ENCODE measurements at regions of chr6 and their contacts with region 1.

Region 1: DNA sequence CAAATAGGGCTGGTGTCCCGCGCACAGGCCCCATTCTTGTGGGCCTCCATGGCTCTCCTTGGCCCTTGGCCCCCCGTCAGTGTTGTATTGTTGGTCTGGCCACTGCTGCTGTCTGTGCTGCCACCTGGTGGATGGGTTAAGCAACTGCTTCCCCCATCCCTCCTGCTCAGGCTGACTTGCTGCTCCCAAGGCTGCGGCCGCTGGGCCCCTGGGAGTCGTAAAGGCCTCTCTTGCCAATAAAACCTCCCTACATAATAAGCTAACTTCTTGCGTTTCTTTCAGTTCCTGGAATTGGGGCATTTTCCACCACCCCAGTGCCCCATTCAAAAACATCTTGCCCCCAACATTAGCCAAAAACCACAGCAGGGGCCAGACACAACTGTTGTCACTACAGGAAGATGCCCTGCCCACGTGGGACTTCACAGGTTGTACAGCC is 27.1 kb downstream of the CD83 start:
- DNase-seq: peak; percentile 72
- ATAC-seq: peak; percentile 98
- H3K4me3 ChIP-seq: no peak overlapping the region
- H3K27ac ChIP-seq: no peak overlapping the region
- H3K4me1 ChIP-seq: no peaks in the 10 kb centered on the region
- H3K27me3 ChIP-seq: peaks cover 2 to 24% of the 10 kb centered on the region in 2 experiments; a peak in 3 of 5 replicates
- CTCF ChIP-seq: peak; percentile 91
- EP300 ChIP-seq: no peak
- POLR2A ChIP-seq: no peak
- RAD21 ChIP-seq: peak; percentile 86

Region 2: GRCh38 chr6:14129575-14129974 is 15.1 kb before region 1 on chr6:
- CTCF ChIA-PET with region 1: interaction called, 31 read pairs
- POLR2A ChIA-PET with region 1: no interaction called
- in situ Hi-C with region 1: no loop called
- intact Hi-C with region 1: loop called (anchors 1 kb)
- DNase-seq: peak; percentile 70
- ATAC-seq: peak; percentile 98
- H3K4me3 ChIP-seq: no peak overlapping the region
- H3K27ac ChIP-seq: no peak overlapping the region
- H3K4me1 ChIP-seq: peaks cover 25% of the 10 kb centered on the region
- H3K27me3 ChIP-seq: no peaks in the 10 kb centered on the region
- CTCF ChIP-seq: peak; percentile 94
- EP300 ChIP-seq: no peak
- POLR2A ChIP-seq: no peak
- RAD21 ChIP-seq: peak; percentile 73

Region 3: DNA sequence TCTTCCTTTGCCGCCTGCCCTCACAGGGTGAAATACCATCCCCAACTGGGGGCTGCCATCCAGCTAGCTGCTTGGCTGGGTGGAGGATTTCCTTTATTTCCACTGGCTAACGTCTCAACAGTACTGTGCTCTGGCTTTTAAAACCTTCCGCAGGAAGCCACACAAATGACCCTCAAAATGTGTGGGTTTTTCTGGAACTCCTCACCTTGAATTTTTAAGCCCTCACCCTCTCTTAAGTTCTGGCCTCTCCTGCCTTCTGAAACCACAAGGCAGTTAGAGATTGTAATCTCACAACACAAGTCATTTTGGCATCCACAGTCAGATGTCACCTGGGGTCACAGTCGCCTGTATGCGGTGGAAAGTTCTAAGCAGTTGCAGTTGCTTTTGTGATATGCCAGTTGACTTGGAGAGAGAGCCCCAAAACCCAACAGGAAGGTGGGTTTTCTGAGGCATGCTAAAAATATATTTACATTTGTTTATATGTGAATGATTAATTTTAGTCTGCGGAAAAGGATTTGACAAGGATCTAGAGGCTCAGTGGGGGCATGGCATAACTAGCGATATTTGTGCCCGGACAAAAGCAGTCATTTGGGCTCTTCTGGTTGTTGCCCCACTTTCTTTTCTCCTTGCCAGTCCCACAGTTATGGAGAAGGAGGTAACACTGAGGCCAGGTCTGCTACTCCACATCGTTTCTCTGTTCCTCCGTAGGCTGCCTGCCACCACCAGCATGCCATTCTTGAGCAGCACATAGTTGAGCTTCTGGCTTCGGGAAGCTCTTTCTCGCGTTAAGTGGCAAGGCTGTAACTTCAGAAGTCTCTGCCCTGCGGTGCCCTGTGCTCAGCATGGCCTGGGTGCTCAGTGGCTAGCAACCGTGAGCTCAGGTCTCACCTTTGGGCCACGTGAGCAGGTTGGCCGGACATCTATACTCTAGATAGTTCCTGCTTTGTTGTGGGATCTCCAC is 308.2 kb after region 1 on chr6:
- CTCF ChIA-PET with region 1: no interaction called
- POLR2A ChIA-PET with region 1: no interaction called
- in situ Hi-C with region 1: no loop called
- intact Hi-C with region 1: no loop called
- DNase-seq: no peak
- ATAC-seq: no peak
- H3K4me3 ChIP-seq: no peak overlapping the region
- H3K27ac ChIP-seq: no peak overlapping the region
- H3K4me1 ChIP-seq: no peaks in the 10 kb centered on the region
- H3K27me3 ChIP-seq: peaks cover 1 to 3% of the 10 kb centered on the region in 2 experiments; a peak in 2 of 5 replicates
- CTCF ChIP-seq: no peak
- EP300 ChIP-seq: no peak
- POLR2A ChIP-seq: no peak
- RAD21 ChIP-seq: no peak